ENCODE measurements at regions of chr7 and their contacts with region 1.

Region 1: GRCh38 chr7:32453341-32454011 is 36.7 kb downstream of the LSM5 start:
- DNase-seq: no peak
- H3K4me3 Mint-ChIP-seq: no peak overlapping the region
- H3K27ac Mint-ChIP-seq: no peak overlapping the region
- H3K4me1 Mint-ChIP-seq: no peaks in the 10 kb centered on the region
- H3K27me3 Mint-ChIP-seq: peaks cover 83% of the 10 kb centered on the region
- CTCF ChIP-seq: no peak

Region 2: DNA sequence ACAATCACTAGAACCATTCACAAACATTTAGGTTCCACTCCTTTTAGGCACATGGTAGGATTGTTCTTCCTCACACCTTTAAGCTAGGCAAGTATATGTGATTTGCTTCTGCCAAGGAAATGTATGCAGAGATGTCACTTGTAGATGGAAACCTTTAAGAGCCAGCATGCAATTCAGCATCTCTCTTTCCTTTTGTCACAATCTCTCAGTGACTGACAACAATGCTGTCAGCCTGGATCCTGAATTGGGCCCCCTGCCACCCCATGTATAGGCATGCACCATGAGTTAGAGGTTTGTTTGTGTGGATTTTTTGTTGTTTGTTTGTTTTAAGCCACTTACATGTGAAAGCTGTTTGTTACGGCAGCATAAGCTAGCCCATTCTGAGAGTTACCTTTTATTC is 213.7 kb before region 1 on chr7:
- CTCF ChIA-PET with region 1: no interaction called
- intact Hi-C with region 1: loop called (anchors 10 kb)
- DNase-seq: no peak
- H3K4me3 Mint-ChIP-seq: no peak overlapping the region
- H3K27ac Mint-ChIP-seq: no peak overlapping the region
- H3K4me1 Mint-ChIP-seq: no peaks in the 10 kb centered on the region
- H3K27me3 Mint-ChIP-seq: peaks cover 13% of the 10 kb centered on the region
- CTCF ChIP-seq: no peak

Region 3: GRCh38 chr7:32415936-32416335 is 37.5 kb before region 1 on chr7:
- CTCF ChIA-PET with region 1: no interaction called
- intact Hi-C with region 1: loop called (anchors 1 kb)
- DNase-seq: no peak
- H3K4me3 Mint-ChIP-seq: no peak overlapping the region
- H3K27ac Mint-ChIP-seq: no peak overlapping the region
- H3K4me1 Mint-ChIP-seq: no peaks in the 10 kb centered on the region
- H3K27me3 Mint-ChIP-seq: peaks cover 91% of the 10 kb centered on the region
- CTCF ChIP-seq: no peak

Measured in Calu3 (cell line).